Caco-2 (cell line): ENCODE measurements at regions of chr19 and their contacts with region 1.

Region 1: GRCh38 chr19:43555185-43555770 is 20.0 kb downstream of the XRCC1 start:
- DNase-seq: peak; percentile 72 to 84
- H3K4me3 ChIP-seq: no peak overlapping the region
- H3K4me3 Mint-ChIP-seq: no peak overlapping the region
- H3K27ac Mint-ChIP-seq: no peak overlapping the region
- H3K4me1 ChIP-seq: no peaks in the 10 kb centered on the region
- H3K4me1 Mint-ChIP-seq: no peaks in the 10 kb centered on the region
- H3K27me3 ChIP-seq: no peaks in the 10 kb centered on the region
- H3K27me3 Mint-ChIP-seq: no peaks in the 10 kb centered on the region
- CTCF ChIP-seq: peak; percentile 79 to 90

Region 2: DNA sequence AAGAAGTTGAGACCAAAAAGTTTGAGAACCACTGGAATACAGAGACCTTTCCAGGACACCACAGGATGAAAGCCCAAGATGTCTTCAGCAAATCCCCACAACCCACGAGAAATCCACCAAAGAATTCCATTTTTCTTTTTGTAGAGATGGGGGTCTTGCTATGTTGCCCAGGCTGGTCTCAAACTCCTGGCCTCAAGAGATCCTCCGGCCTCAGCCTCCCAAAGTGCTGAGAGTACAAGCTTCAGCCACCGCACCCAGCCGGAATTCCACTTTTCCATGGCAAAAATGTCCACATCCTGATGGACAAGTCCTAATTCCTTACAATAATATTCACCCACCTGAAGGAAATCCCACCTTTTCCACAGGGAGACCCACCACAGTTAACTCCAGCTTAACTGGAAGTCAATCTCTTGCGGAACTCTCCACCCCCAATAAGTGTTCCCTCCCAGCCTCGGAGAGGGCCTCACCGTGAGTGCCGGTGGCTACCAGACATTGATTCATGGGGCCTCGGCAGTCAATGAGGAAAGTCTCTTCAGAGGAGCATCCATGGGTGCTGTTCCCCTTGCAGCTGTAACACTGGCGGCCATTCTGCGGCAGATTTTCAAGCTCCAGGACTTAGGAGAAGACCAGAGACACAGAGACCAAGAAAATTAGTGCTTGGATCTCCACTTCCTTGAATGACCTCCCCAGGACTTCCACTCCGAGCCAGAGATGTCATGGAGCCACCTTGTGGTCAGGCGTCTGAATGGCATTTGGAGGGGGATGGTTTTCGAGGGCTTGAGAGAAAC is 96.7 kb after region 1 on chr19:
- CTCF ChIA-PET with region 1: interaction called, 13 read pairs
- POLR2A ChIA-PET with region 1: no interaction called
- intact Hi-C with region 1: loop called (anchors 1 kb)
- DNase-seq: peak; percentile 76 to 79
- H3K4me3 ChIP-seq: no peak overlapping the region
- H3K4me3 Mint-ChIP-seq: peak overlapping the region; percentile 37
- H3K27ac Mint-ChIP-seq: peak overlapping the region; percentile 36
- H3K4me1 ChIP-seq: no peaks in the 10 kb centered on the region
- H3K4me1 Mint-ChIP-seq: no peaks in the 10 kb centered on the region
- H3K27me3 ChIP-seq: no peaks in the 10 kb centered on the region
- H3K27me3 Mint-ChIP-seq: no peaks in the 10 kb centered on the region
- CTCF ChIP-seq: peak; percentile 79 to 94

Region 3: DNA sequence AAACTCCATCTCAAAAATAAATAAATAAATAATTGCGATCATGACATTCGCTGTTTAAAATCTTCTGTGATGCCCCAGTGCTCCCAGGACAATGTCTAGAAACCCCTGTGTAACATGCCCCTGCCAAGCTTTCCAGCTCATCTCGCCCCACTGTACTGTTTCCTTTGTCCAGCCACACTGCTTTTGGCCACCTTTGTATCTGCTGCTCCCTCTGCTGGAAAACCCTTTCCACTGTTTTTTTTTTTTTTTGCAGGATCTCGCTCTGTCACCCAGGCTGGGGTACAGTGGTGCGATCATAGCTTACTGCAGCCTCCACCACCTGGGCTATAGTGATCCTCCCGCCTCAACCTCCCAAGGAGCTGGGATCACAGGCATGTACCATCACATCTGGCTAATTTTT is 107.2 kb after region 1 on chr19:
- CTCF ChIA-PET with region 1: interaction called, 12 read pairs
- POLR2A ChIA-PET with region 1: no interaction called
- intact Hi-C with region 1: no loop called
- DNase-seq: no peak
- H3K4me3 ChIP-seq: no peak overlapping the region
- H3K4me3 Mint-ChIP-seq: no peak overlapping the region
- H3K27ac Mint-ChIP-seq: no peak overlapping the region
- H3K4me1 ChIP-seq: no peaks in the 10 kb centered on the region
- H3K4me1 Mint-ChIP-seq: no peaks in the 10 kb centered on the region
- H3K27me3 ChIP-seq: no peaks in the 10 kb centered on the region
- H3K27me3 Mint-ChIP-seq: no peaks in the 10 kb centered on the region
- CTCF ChIP-seq: peak in 1 of 2 experiments; percentile 29

Region 4: DNA sequence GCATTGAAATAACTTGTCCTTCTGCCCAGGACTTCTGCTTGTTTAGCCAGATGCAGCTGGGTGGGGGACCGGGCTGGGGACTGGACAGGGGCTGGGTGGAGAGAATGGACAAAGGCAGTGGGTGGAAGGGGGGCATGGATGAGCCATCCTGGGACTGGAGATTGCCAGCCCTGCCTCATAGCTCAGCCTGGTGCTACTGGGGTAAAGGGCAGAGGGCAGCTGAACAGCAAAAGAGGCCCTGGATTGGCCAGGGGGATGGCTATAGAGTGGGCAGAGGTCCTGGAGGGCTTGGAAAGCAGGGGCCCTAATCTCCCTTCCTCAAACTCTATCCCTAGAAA is 132.4 kb after region 1 on chr19:
- CTCF ChIA-PET with region 1: no interaction called
- POLR2A ChIA-PET with region 1: no interaction called
- intact Hi-C with region 1: no loop called
- DNase-seq: no peak
- H3K4me3 ChIP-seq: no peak overlapping the region
- H3K4me3 Mint-ChIP-seq: no peak overlapping the region
- H3K27ac Mint-ChIP-seq: no peak overlapping the region
- H3K4me1 ChIP-seq: no peaks in the 10 kb centered on the region
- H3K4me1 Mint-ChIP-seq: no peaks in the 10 kb centered on the region
- H3K27me3 ChIP-seq: no peaks in the 10 kb centered on the region
- H3K27me3 Mint-ChIP-seq: no peaks in the 10 kb centered on the region
- CTCF ChIP-seq: no peak